ENCODE measurements at regions of chr6 and their contacts with region 1.

Region 1: GRCh38 chr6:73129653-73130443 is 95.4 kb downstream of the KHDC1L start:
- DNase-seq: peak; percentile 66
- CTCF ChIP-seq: peak; percentile 99

Region 2: GRCh38 chr6:72425003-72425681 is 704.7 kb before region 1 on chr6:
- CTCF ChIA-PET with region 1: interaction called, 13 read pairs
- POLR2A ChIA-PET with region 1: no interaction called
- DNase-seq: no peak
- CTCF ChIP-seq: no peak

Region 3: DNA sequence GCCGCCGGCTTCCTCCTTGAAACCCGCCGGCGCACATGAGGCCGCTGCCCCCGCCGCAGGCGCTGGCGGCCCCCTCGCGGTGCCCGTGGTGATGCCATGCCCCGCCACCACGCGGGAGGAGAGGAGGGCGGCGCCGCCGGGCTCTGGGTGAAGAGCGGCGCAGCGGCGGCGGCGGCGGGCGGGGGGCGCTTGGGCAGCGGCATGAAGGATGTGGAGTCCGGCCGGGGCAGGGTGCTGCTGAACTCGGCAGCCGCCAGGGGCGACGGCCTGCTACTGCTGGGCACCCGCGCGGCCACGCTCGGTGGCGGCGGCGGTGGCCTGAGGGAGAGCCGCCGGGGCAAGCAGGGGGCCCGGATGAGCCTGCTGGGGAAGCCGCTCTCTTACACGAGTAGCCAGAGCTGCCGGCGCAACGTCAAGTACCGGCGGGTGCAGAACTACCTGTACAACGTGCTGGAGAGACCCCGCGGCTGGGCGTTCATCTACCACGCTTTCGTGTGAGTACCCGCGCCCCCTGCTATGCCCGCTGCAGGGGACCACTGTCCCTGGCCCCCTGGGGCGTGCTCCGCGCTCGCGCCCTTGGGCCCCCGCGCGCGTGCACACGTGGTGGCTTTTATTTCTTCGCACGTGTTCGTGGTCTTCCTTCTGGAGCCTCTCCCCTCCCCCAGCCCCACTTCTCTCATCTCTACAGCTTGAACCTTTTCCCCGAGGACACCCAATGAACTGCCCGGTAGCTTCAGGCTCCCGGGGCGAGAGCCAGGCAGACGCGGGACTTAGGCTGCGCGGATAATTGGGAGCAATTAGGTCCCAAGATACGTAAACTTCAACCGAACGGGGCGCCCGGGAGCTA is 507.5 kb before region 1 on chr6:
- CTCF ChIA-PET with region 1: interaction called, 300 read pairs
- POLR2A ChIA-PET with region 1: no interaction called
- DNase-seq: peak; percentile 64
- CTCF ChIP-seq: peak; percentile 32

Region 4: DNA sequence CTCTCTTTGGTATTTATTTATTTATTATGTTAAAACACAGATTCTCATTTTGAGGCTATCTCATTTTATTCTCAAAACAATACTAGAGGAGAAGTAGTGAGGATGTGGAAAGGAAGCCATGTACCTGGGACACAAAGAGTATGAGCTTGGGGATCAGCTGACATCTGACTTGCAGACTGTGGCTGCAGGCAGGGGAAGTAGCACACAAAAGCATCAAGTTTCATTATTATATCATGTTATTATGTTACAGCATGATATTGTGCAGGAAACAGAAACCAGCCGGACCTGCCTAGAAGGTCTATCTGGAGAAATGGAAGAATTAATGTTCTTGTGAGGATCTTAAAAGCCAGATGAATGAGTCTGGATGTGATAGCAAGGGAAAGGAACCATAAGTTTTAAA is 152.7 kb before region 1 on chr6:
- CTCF ChIA-PET with region 1: no interaction called
- POLR2A ChIA-PET with region 1: no interaction called
- DNase-seq: peak; percentile 15
- CTCF ChIP-seq: no peak

Region 5: GRCh38 chr6:73116330-73116729 is 13.5 kb before region 1 on chr6:
- CTCF ChIA-PET with region 1: interaction called, 46 read pairs
- POLR2A ChIA-PET with region 1: no interaction called
- DNase-seq: no peak
- CTCF ChIP-seq: no peak

Region 6: DNA sequence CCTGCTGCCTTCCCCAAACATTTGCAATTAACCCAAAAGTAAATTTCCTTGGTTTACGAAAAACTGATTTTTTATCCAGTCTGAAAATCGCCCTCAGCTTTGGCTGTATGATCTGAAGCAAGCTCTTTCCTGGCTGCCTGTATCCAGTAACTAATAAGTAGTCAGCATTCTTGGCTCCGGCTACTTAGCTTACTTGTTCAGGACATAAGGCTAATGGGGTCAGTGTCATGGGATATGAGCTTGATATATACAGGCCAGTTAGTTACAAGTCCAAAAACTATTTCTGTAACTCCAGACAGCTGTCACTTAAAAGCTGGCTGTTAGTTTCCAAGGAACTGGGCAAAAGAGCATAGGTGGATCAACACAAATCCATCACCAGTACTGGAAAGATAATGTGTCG is 39.3 kb after region 1 on chr6:
- CTCF ChIA-PET with region 1: interaction called, 10 read pairs
- POLR2A ChIA-PET with region 1: no interaction called
- DNase-seq: no peak
- CTCF ChIP-seq: no peak